ENCODE measurements at regions of chr9 and their contacts with region 1.

Region 1: GRCh38 chr9:4596165-4596922 is 65.8 kb upstream of the PLPP6 start:
- DNase-seq: peak; percentile 30 to 86 (median 55)
- ATAC-seq: peak; percentile 91
- H3K4me3 ChIP-seq: no peak overlapping the region
- H3K4me3 Mint-ChIP-seq: peak overlapping the region; percentile 62
- H3K27ac ChIP-seq: peak overlapping the region; percentile 25 to 73
- H3K27ac Mint-ChIP-seq: peak overlapping the region; percentile 94
- H3K4me1 ChIP-seq: peaks cover 39% of the 10 kb centered on the region
- H3K4me1 Mint-ChIP-seq: peaks cover 72% of the 10 kb centered on the region
- H3K27me3 ChIP-seq: no peaks in the 10 kb centered on the region
- H3K27me3 Mint-ChIP-seq: no peaks in the 10 kb centered on the region
- CTCF ChIP-seq: peak; percentile 50

Region 2: DNA sequence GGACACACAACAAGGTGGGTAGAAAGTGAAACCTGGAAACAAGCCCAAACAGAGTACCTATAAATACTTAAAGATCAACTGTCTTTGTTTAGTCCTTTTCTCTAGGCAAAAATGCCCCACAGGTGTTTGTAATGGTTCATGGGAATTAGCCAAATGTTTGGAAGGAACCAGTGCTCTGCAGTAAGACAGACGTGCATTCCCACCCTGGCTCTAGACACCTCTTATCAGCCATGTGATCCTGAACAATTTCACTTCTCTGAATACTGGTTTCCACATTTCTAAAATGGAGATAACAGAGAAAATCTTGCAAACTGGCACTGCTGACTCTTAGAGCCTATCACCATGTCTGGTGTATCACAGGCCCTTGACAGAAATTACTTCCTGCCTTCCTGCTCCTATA is 326.5 kb before region 1 on chr9:
- CTCF ChIA-PET with region 1: no interaction called
- POLR2A ChIA-PET with region 1: no interaction called
- intact Hi-C with region 1: no loop called
- DNase-seq: no peak
- ATAC-seq: no peak
- H3K4me3 ChIP-seq: no peak overlapping the region
- H3K4me3 Mint-ChIP-seq: no peak overlapping the region
- H3K27ac ChIP-seq: no peak overlapping the region
- H3K27ac Mint-ChIP-seq: no peak overlapping the region
- H3K4me1 ChIP-seq: no peaks in the 10 kb centered on the region
- H3K4me1 Mint-ChIP-seq: no peaks in the 10 kb centered on the region
- H3K27me3 ChIP-seq: no peaks in the 10 kb centered on the region
- H3K27me3 Mint-ChIP-seq: peaks cover 22% of the 10 kb centered on the region
- CTCF ChIP-seq: no peak

Region 3: GRCh38 chr9:4489919-4490704 is 106.2 kb before region 1 on chr9 and contains the start of gene SLC1A1:
- CTCF ChIA-PET with region 1: no interaction called
- POLR2A ChIA-PET with region 1: interaction called, 4 read pairs
- intact Hi-C with region 1: loop called (anchors 5 to 10 kb)
- DNase-seq: peak in 10 of 14 experiments; percentile 4 to 49 (median 26)
- ATAC-seq: peak; percentile 72
- H3K4me3 ChIP-seq: peak within 1 kb of the TSS; percentile 43
- H3K4me3 Mint-ChIP-seq: peak within 1 kb of the TSS; percentile 90
- H3K27ac ChIP-seq: no peak within 1 kb of the TSS
- H3K27ac Mint-ChIP-seq: no peak within 1 kb of the TSS
- H3K4me1 ChIP-seq: peaks cover 22% of the 10 kb centered on the region
- H3K4me1 Mint-ChIP-seq: peaks cover 31% of the 10 kb centered on the region
- H3K27me3 ChIP-seq: peaks cover 31 to 48% of the 10 kb centered on the region in 2 experiments
- H3K27me3 Mint-ChIP-seq: peaks cover 43% of the 10 kb centered on the region
- CTCF ChIP-seq: no peak
- total RNA-seq, gene SLC1A1: 0.11 to 0.14 TPM

Region 4: GRCh38 chr9:4548811-4549725 is 47.3 kb before region 1 on chr9:
- CTCF ChIA-PET with region 1: no interaction called
- POLR2A ChIA-PET with region 1: interaction called, 21 read pairs
- intact Hi-C with region 1: loop called (anchors 2 to 5 kb)
- DNase-seq: no peak
- ATAC-seq: no peak
- H3K4me3 ChIP-seq: no peak overlapping the region
- H3K4me3 Mint-ChIP-seq: peak overlapping the region; percentile 28
- H3K27ac ChIP-seq: no peak overlapping the region
- H3K27ac Mint-ChIP-seq: no peak overlapping the region
- H3K4me1 ChIP-seq: peaks cover 28% of the 10 kb centered on the region
- H3K4me1 Mint-ChIP-seq: peaks cover 75% of the 10 kb centered on the region
- H3K27me3 ChIP-seq: no peaks in the 10 kb centered on the region
- H3K27me3 Mint-ChIP-seq: no peaks in the 10 kb centered on the region
- CTCF ChIP-seq: no peak

Region 5: GRCh38 chr9:4555251-4555650 is 41.1 kb before region 1 on chr9:
- CTCF ChIA-PET with region 1: no interaction called
- POLR2A ChIA-PET with region 1: interaction called, 21 read pairs
- intact Hi-C with region 1: loop called (anchors 2 to 5 kb)
- DNase-seq: peak in 10 of 14 experiments; percentile 11 to 64 (median 34)
- ATAC-seq: peak; percentile 80
- H3K4me3 ChIP-seq: no peak overlapping the region
- H3K4me3 Mint-ChIP-seq: peak overlapping the region; percentile 1
- H3K27ac ChIP-seq: no peak overlapping the region
- H3K27ac Mint-ChIP-seq: peak overlapping the region; percentile 52
- H3K4me1 ChIP-seq: peaks cover 27% of the 10 kb centered on the region
- H3K4me1 Mint-ChIP-seq: peaks cover 59% of the 10 kb centered on the region
- H3K27me3 ChIP-seq: no peaks in the 10 kb centered on the region
- H3K27me3 Mint-ChIP-seq: no peaks in the 10 kb centered on the region
- CTCF ChIP-seq: no peak

Region 6: GRCh38 chr9:4662108-4662988 is 66.0 kb after region 1 on chr9 and contains the start of gene PLPP6:
- CTCF ChIA-PET with region 1: no interaction called
- POLR2A ChIA-PET with region 1: interaction called, 16 read pairs
- intact Hi-C with region 1: loop called in 1 of 2 experiments (anchors 2 kb)
- DNase-seq: peak; percentile 48 to 91 (median 69)
- ATAC-seq: peak; percentile 75
- H3K4me3 ChIP-seq: peak within 1 kb of the TSS; percentile 81
- H3K4me3 Mint-ChIP-seq: peak within 1 kb of the TSS; percentile 97
- H3K27ac ChIP-seq: peak within 1 kb of the TSS; percentile 70 to 72
- H3K27ac Mint-ChIP-seq: peak within 1 kb of the TSS; percentile 88
- H3K4me1 ChIP-seq: peaks cover 45% of the 10 kb centered on the region
- H3K4me1 Mint-ChIP-seq: peaks cover 58% of the 10 kb centered on the region
- H3K27me3 ChIP-seq: no peaks in the 10 kb centered on the region
- H3K27me3 Mint-ChIP-seq: no peaks in the 10 kb centered on the region
- CTCF ChIP-seq: peak; percentile 66
- total RNA-seq, gene PLPP6: 8.9 to 10.5 TPM

Measured in CD4-positive, alpha-beta T cell (primary cell).